Natural killer cell (primary cell): ENCODE measurements at regions of chr21 and their contacts with region 1.

Region 1: DNA sequence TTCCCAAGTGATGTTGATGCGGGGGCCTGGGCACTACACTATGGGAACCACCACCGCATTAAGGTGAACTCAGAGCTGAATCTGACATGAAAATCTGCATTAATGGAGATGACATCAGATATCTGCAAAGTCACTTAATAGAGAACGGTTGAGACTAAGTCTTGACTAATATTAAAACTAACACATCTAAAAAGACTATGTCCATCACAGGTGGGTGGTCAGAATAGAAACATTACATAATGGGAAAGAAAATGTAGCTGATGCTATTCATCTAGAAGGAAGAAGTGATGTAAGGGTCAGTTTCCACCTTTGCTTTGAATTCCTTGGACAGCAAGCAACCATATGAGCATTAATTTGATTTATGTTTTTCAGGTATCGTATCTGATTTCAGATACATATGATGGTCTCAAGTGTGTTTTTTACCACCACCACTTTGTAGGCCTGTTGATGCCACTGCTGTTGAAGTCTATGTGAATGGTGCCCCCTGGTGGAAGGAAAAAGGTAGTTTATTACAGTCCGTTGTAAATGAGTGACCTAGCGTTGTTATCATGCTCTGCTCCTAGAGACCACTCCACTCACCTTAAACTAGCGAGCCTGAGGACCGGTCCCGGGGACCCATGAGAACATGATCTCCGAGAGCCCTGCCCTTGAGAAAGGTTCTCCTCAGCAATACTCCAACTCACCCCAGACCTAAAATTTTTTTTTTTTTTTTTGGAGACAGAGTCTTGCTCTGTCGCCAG is 73.5 kb downstream of the BACH1 start:
- DNase-seq: peak; percentile 18 to 88
- ATAC-seq: peak; percentile 79 to 86 (median 84)
- H3K4me3 ChIP-seq: no peak overlapping the region
- H3K4me3 Mint-ChIP-seq: no peak overlapping the region
- H3K27ac ChIP-seq: no peak overlapping the region
- H3K27ac Mint-ChIP-seq: no peak overlapping the region
- H3K4me1 ChIP-seq: peaks cover 5% of the 10 kb centered on the region
- H3K4me1 Mint-ChIP-seq: peaks cover 10% of the 10 kb centered on the region in 2 donors
- H3K27me3 ChIP-seq: no peaks in the 10 kb centered on the region
- H3K27me3 Mint-ChIP-seq: no peaks in the 10 kb centered on the region
- CTCF ChIP-seq: peak; percentile 77

Region 2: GRCh38 chr21:29091032-29091431 is 281.2 kb before region 1 on chr21:
- intact Hi-C with region 1: loop called (anchors 1 kb)
- DNase-seq: no peak
- ATAC-seq: no peak
- H3K4me3 ChIP-seq: no peak overlapping the region
- H3K4me3 Mint-ChIP-seq: no peak overlapping the region
- H3K27ac ChIP-seq: no peak overlapping the region
- H3K27ac Mint-ChIP-seq: no peak overlapping the region
- H3K4me1 ChIP-seq: no peaks in the 10 kb centered on the region
- H3K4me1 Mint-ChIP-seq: no peaks in the 10 kb centered on the region
- H3K27me3 ChIP-seq: no peaks in the 10 kb centered on the region
- H3K27me3 Mint-ChIP-seq: no peaks in the 10 kb centered on the region
- CTCF ChIP-seq: no peak

Region 3: GRCh38 chr21:29232601-29233546 is 139.4 kb before region 1 on chr21:
- intact Hi-C with region 1: loop called (anchors 10 kb)
- DNase-seq: peak in 1 of 2 donors; percentile 29
- ATAC-seq: no peak
- H3K4me3 ChIP-seq: no peak overlapping the region
- H3K4me3 Mint-ChIP-seq: no peak overlapping the region
- H3K27ac ChIP-seq: peak overlapping the region; percentile 9
- H3K27ac Mint-ChIP-seq: no peak overlapping the region
- H3K4me1 ChIP-seq: peaks cover 5% of the 10 kb centered on the region
- H3K4me1 Mint-ChIP-seq: peaks cover 0 to 4% of the 10 kb centered on the region in 2 donors
- H3K27me3 ChIP-seq: no peaks in the 10 kb centered on the region
- H3K27me3 Mint-ChIP-seq: no peaks in the 10 kb centered on the region
- CTCF ChIP-seq: no peak

Region 4: DNA sequence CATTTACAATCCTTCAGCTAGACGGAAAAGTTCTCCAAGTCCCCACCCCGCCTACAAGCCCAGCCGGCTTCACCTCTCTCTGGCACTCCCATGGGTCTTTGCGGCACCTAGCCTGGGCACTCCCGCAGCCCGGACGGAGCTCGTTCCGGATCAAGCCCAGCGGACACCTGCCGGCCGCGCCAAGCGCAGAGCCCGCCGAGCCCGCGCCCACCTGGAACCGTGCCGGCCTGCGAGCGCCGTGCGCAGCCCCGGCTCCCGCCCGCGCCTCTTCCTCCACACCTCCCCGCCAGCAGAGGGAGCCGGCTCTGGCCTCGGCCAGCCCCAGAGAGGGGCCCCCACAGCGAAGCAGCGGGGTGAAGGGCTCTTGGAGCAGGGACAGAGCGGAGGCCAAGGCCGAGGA is 1716.1 kb after region 1 on chr21:
- intact Hi-C with region 1: loop called (anchors 5 kb)
- DNase-seq: no peak
- ATAC-seq: no peak
- H3K4me3 ChIP-seq: no peak overlapping the region
- H3K4me3 Mint-ChIP-seq: no peak overlapping the region
- H3K27ac ChIP-seq: no peak overlapping the region
- H3K27ac Mint-ChIP-seq: no peak overlapping the region
- H3K4me1 ChIP-seq: no peaks in the 10 kb centered on the region
- H3K4me1 Mint-ChIP-seq: peaks cover 0 to 6% of the 10 kb centered on the region in 2 donors
- H3K27me3 ChIP-seq: peaks cover 2% of the 10 kb centered on the region
- H3K27me3 Mint-ChIP-seq: peaks cover 12 to 30% of the 10 kb centered on the region in 2 donors
- CTCF ChIP-seq: no peak